Activated CD4-positive, alpha-beta memory T cell treated with anti-CD3 and anti-CD28 coated beads for 36 hours (primary cell): ENCODE measurements at regions of chr13 and their contacts with region 1.

Region 1: DNA sequence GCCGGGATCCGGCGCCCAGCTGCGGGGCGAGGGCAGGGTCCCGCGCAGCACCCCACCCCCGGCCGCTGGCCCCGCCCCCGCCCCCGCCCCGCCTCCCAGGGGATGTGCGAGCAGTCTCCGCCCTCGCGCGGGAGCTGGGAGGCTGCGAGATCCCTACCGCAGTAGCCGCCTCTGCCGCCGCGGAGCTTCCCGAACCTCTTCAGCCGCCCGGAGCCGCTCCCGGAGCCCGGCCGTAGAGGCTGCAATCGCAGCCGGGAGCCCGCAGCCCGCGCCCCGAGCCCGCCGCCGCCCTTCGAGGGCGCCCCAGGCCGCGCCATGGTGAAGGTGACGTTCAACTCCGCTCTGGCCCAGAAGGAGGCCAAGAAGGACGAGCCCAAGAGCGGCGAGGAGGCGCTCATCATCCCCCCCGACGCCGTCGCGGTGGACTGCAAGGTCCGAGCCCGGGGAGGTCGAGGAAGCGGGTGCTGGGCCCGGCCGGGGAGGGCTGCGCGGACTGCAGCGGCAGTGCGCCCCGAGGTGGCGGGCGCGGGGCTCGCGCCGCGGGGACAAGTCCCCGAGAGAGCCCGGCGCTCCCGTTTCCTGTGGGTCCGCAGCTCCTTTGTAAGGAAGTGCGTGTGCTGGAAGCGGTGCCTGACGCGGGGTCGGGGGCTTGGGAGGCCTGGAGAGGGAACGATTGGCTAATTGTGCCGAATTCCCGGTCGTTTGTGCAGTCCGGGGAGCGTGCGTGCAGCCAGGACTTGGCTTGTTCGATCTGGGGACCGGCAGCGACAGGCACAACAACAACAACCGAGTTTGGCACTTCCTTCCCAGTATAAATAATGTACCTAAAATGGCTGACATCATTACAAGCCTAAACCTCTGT is at the start of gene ITM2B:
- DNase-seq: peak; percentile 74
- H3K4me3 Mint-ChIP-seq: peak within 1 kb of the TSS; percentile 93
- H3K27ac Mint-ChIP-seq: peak within 1 kb of the TSS; percentile 95
- H3K4me1 Mint-ChIP-seq: peaks cover 57% of the 10 kb centered on the region
- H3K27me3 Mint-ChIP-seq: no peaks in the 10 kb centered on the region
- total RNA-seq, gene ITM2B: 87.6 to 92.6 TPM

Region 2: DNA sequence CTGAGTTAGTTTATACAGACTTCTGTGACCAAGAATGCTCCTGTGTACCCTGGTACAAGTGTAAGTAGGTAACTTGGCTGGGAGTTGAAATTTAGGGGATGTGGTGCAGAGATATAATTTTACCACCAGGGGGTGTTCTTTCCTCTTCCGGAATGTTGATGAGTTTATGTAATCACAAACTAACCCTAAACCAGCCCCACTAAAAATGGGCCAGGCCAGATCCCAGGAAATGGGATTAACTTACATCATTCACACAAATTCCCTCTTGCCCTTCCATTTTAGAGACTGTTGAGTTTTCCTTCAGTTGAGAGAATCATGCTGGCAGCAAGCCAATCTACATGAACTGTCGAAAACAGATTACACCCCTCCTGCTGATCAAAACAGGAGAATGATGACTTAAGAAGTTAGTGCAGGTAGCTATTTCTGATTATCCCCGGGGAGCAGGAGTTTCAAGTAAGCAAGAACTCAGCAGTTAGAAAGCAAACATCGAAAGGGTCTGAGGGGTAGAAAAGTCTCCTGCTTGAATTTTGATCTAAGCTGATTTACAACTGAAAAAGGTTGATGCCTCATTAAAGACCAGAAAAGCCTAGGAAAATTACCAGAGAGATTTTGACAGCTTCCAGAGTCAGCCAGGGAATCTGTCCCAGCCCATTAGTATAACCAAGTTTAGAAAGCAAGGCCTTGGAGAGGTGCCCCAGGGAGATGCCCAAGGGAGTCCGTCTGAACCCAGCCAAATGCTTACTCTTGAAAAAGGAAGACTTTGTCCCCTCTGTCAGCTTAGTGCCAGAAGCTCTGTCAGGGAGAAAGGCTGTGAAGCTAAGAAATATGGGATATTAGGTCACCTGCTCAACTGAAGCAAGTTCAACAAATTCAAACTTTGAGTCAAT is 106.1 kb before region 1 on chr13:
- CTCF ChIA-PET with region 1: interaction called, 20 read pairs
- POLR2A ChIA-PET with region 1: interaction called, 3 read pairs
- intact Hi-C with region 1: loop called (anchors 1 kb)
- DNase-seq: peak; percentile 26
- H3K4me3 Mint-ChIP-seq: peak overlapping the region; percentile 10
- H3K27ac Mint-ChIP-seq: no peak overlapping the region
- H3K4me1 Mint-ChIP-seq: peaks cover 22% of the 10 kb centered on the region
- H3K27me3 Mint-ChIP-seq: peaks cover 3% of the 10 kb centered on the region

Region 3: DNA sequence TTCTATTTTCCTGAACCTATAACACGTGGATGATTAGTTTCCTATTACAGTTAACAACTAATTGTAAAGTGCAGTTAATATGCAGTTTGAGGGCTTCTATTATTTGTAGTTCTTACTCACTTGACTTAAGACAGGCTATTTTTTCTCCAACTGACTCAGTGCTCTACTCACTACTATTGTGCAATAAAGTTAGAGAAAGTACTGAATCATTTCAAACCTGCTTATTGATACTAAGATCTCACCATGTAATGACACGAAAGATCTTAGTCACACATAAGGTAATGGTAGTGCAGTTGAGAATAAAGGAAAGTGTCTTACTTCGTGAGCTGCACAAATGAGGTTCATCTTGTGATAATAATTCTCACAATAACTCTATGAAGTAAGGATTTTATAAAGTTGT is 23.1 kb before region 1 on chr13:
- CTCF ChIA-PET with region 1: interaction called, 4 read pairs
- POLR2A ChIA-PET with region 1: interaction called, 3 read pairs
- intact Hi-C with region 1: loop called (anchors 1 kb)
- DNase-seq: no peak
- H3K4me3 Mint-ChIP-seq: no peak overlapping the region
- H3K27ac Mint-ChIP-seq: no peak overlapping the region
- H3K4me1 Mint-ChIP-seq: peaks cover 20% of the 10 kb centered on the region
- H3K27me3 Mint-ChIP-seq: peaks cover 9% of the 10 kb centered on the region

Region 4: DNA sequence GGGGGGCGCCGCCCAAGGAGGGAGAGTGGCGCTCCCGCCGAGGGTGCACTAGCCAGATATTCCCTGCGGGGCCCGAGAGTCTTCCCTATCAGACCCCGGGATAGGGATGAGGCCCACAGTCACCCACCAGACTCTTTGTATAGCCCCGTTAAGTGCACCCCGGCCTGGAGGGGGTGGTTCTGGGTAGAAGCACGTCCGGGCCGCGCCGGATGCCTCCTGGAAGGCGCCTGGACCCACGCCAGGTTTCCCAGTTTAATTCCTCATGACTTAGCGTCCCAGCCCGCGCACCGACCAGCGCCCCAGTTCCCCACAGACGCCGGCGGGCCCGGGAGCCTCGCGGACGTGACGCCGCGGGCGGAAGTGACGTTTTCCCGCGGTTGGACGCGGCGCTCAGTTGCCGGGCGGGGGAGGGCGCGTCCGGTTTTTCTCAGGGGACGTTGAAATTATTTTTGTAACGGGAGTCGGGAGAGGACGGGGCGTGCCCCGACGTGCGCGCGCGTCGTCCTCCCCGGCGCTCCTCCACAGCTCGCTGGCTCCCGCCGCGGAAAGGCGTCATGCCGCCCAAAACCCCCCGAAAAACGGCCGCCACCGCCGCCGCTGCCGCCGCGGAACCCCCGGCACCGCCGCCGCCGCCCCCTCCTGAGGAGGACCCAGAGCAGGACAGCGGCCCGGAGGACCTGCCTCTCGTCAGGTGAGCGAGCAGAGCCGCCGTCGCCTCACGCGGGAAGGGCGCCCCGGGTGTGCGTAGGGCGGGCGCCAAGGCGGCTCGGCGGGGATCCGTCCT is 70.3 kb after region 1 on chr13 and contains the start of gene RB1:
- CTCF ChIA-PET with region 1: no interaction called
- POLR2A ChIA-PET with region 1: interaction called, 4 read pairs
- intact Hi-C with region 1: loop called (anchors 1 kb)
- DNase-seq: peak; percentile 94
- H3K4me3 Mint-ChIP-seq: peak within 1 kb of the TSS; percentile 97
- H3K27ac Mint-ChIP-seq: peak within 1 kb of the TSS; percentile 93
- H3K4me1 Mint-ChIP-seq: peaks cover 27% of the 10 kb centered on the region
- H3K27me3 Mint-ChIP-seq: no peaks in the 10 kb centered on the region
- total RNA-seq, gene RB1: 26.5 to 28.8 TPM

Region 5: DNA sequence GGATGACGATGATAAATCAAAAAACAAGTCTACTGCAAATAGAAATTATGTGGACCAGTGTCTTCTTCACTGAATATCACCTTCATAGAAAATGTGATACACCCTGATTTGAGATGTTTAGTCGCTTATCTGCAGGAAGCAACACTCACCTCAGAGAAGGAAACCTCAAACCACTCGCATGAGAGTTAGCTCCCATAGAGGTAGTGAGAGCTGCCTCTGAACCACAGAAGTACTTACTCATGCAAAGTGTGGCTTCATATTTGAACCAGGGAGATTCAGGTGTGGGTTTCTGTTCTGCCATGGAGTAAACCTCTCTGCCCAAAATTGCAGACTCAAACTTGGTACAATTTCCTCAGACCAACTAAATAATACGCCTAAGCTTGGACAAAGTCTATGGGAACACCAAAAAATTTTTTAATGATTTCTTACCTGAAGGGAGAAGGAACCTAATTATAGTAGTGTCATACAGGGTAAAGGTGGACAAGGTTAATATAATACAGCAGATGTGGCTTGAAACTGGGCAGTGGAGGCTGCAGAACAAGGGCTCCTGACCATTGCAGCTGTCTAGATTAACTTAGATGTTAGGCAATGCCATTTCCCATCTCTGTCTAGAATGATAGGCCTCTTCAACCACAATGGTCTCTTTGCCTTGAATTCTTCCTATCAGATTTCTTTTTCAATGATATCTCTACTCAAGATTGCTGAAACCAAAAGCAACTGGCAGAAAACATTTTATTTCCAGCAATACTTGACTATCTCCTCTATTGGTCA is 329.2 kb after region 1 on chr13:
- CTCF ChIA-PET with region 1: no interaction called
- POLR2A ChIA-PET with region 1: no interaction called
- intact Hi-C with region 1: loop called (anchors 2 kb)
- DNase-seq: peak; percentile 79
- H3K4me3 Mint-ChIP-seq: peak overlapping the region; percentile 31
- H3K27ac Mint-ChIP-seq: peak overlapping the region; percentile 58
- H3K4me1 Mint-ChIP-seq: peaks cover 43% of the 10 kb centered on the region
- H3K27me3 Mint-ChIP-seq: peaks cover 52% of the 10 kb centered on the region

Region 6: GRCh38 chr13:49443704-49444523 is 1210.6 kb after region 1 on chr13 and contains the starts of genes CAB39L and SETDB2:
- CTCF ChIA-PET with region 1: no interaction called
- POLR2A ChIA-PET with region 1: no interaction called
- intact Hi-C with region 1: loop called (anchors 5 kb)
- DNase-seq: peak; percentile 100
- H3K4me3 Mint-ChIP-seq: peak within 1 kb of the TSS; percentile 85
- H3K27ac Mint-ChIP-seq: peak within 1 kb of the TSS; percentile 94
- H3K4me1 Mint-ChIP-seq: peaks cover 62% of the 10 kb centered on the region
- H3K27me3 Mint-ChIP-seq: no peaks in the 10 kb centered on the region
- total RNA-seq, gene CAB39L: 5.6 to 6.3 TPM
- total RNA-seq, gene SETDB2: 13.9 to 15.9 TPM